ENCODE measurements at regions of chr6 and their contacts with region 1.

Region 1: DNA sequence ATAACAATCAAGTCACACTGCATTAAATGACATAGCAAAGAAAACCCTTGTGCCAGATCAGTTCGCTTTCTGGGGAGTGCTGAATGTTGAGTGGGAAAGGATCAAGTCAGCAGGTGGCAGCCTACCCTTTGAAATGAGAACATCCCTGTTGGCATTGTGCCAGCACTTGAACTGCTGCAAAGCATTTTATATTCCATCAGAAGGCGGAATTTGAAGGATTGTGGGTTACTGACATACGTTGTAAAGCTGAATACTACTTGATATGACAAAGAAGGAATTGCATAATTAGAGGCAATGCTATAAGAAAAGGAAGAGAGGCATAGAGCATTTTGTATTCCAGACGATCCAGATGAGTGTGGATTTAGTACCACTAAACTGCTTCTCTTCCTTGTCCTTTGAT is 26.5 kb downstream of the BCKDHB start:
- DNase-seq: peak; percentile 40
- H3K4me3 Mint-ChIP-seq: no peak overlapping the region
- H3K27ac Mint-ChIP-seq: no peak overlapping the region
- H3K4me1 Mint-ChIP-seq: no peaks in the 10 kb centered on the region
- H3K27me3 Mint-ChIP-seq: no peaks in the 10 kb centered on the region

Region 2: GRCh38 chr6:80338201-80338836 is 205.3 kb after region 1 on chr6:
- CTCF ChIA-PET with region 1: no interaction called
- POLR2A ChIA-PET with region 1: no interaction called
- intact Hi-C with region 1: loop called (anchors 10 kb)
- DNase-seq: peak; percentile 68
- H3K4me3 Mint-ChIP-seq: no peak overlapping the region
- H3K27ac Mint-ChIP-seq: no peak overlapping the region
- H3K4me1 Mint-ChIP-seq: no peaks in the 10 kb centered on the region
- H3K27me3 Mint-ChIP-seq: no peaks in the 10 kb centered on the region